Pancreas (tissue), 10 donors: ENCODE measurements at regions of chr14 and their contacts with region 1.

Region 1: GRCh38 chr14:60622917-60623257 is 26.4 kb downstream of the SIX1 start:
- DNase-seq: no peak
- ATAC-seq: peak in 2 of 4 donors; percentile 7 to 14
- H3K4me3 ChIP-seq: no peak overlapping the region
- H3K27ac ChIP-seq: peak overlapping the region in 2 of 4 donors; percentile 10 to 19
- H3K4me1 ChIP-seq: peaks cover 11 to 27% (median 19%) of the 10 kb centered on the region in 3 donors
- H3K27me3 ChIP-seq: no peaks in the 10 kb centered on the region
- CTCF ChIP-seq: no peak

Region 2: GRCh38 chr14:61025251-61026223 is 402.6 kb after region 1 on chr14:
- intact Hi-C with region 1: loop called in 2 of 3 experiments (anchors 5 kb)
- DNase-seq: peak in 5 of 6 donors; percentile 24 to 59 (median 33)
- ATAC-seq: peak in 3 of 4 donors; percentile 81 to 90 (median 85)
- H3K4me3 ChIP-seq: no peak overlapping the region
- H3K27ac ChIP-seq: no peak overlapping the region
- H3K4me1 ChIP-seq: no peaks in the 10 kb centered on the region
- H3K27me3 ChIP-seq: no peaks in the 10 kb centered on the region
- CTCF ChIP-seq: peak; percentile 55 to 85 (median 62)

Region 3: DNA sequence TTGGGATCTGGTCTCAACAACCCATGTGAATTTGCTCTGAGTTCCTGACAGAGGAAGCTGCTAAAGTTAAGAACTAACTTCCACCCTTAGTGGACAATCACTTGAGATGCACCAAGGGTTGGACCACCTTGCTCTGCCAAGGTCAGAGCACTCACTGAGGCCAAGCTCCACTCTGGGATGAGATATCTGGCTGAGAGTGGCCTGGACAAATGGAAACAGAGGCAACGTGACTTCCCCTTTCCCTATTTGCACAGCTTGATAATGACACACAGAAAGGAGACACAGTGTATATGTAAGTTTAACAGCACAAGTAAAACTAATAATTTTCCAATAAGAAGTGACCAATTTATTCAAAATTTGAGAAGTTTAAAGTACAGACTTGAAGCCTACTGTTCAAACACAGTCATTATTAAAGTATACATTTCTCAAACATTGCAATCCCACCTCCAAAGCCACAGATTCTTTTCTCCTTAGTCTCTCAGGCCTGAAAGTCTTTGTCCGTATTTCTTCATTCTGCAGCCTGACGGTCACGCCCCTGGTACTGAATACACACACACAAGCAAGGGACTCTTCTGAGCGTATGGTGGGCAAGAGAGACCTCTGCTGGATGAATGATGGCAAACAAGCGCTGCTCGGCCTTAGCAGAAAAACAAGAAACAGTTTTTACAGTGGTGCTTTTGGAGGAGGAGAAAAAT is 629.6 kb after region 1 on chr14:
- intact Hi-C with region 1: loop called in 2 of 3 experiments (anchors 5 to 10 kb)
- DNase-seq: peak in 5 of 6 donors; percentile 52 to 75 (median 64)
- ATAC-seq: peak; percentile 96 to 100 (median 99)
- H3K4me3 ChIP-seq: no peak overlapping the region
- H3K27ac ChIP-seq: no peak overlapping the region
- H3K4me1 ChIP-seq: no peaks in the 10 kb centered on the region
- H3K27me3 ChIP-seq: no peaks in the 10 kb centered on the region
- CTCF ChIP-seq: peak; percentile 37 to 70 (median 68)